Left ventricle myocardium inferior (tissue), 1 donor: ENCODE measurements at regions of chr6 and their contacts with region 1.

Region 1: DNA sequence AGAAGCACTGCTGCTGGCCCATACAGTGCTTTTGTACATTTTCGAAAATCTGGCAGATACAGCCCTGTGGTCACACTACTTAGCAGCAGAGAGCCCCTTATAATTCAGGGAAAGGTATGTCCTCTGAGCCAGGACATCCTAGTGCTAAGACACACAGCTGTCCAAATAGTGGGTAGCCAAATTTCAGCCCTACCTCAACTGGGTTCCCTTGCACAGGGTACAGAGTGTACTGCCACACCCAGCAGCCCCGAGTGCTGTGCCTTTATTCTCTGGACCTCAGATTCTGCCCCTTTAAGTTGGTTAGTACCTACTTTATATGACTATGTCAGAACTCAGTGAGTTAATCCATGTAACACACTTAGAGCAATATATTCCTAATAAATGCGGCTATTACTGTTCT is 47.6 kb downstream of the PRPH2 start:
- DNase-seq: no peak
- H3K4me3 ChIP-seq: no peak overlapping the region
- H3K27ac ChIP-seq: no peak overlapping the region
- H3K4me1 ChIP-seq: no peaks in the 10 kb centered on the region
- H3K27me3 ChIP-seq: no peaks in the 10 kb centered on the region
- CTCF ChIP-seq: no peak

Region 2: GRCh38 chr6:42637681-42638080 is 37.1 kb before region 1 on chr6:
- intact Hi-C with region 1: loop called (anchors 5 kb)
- DNase-seq: no peak
- H3K4me3 ChIP-seq: no peak overlapping the region
- H3K27ac ChIP-seq: no peak overlapping the region
- H3K4me1 ChIP-seq: no peaks in the 10 kb centered on the region
- H3K27me3 ChIP-seq: no peaks in the 10 kb centered on the region
- CTCF ChIP-seq: no peak

Region 3: GRCh38 chr6:43013843-43014433 is 339.2 kb after region 1 on chr6 and contains the starts of genes KLHDC3 and MEA1:
- intact Hi-C with region 1: no loop called
- DNase-seq: peak; percentile 99
- H3K4me3 ChIP-seq: peak within 1 kb of the TSS; percentile 83
- H3K27ac ChIP-seq: peak within 1 kb of the TSS; percentile 89
- H3K4me1 ChIP-seq: peaks cover 65% of the 10 kb centered on the region
- H3K27me3 ChIP-seq: no peaks in the 10 kb centered on the region
- CTCF ChIP-seq: no peak
- total RNA-seq, gene KLHDC3: 108 TPM
- total RNA-seq, gene MEA1: 32.6 TPM